Panc1 (cell line): ENCODE measurements at regions of chr12 and their contacts with region 1.

Region 1: DNA sequence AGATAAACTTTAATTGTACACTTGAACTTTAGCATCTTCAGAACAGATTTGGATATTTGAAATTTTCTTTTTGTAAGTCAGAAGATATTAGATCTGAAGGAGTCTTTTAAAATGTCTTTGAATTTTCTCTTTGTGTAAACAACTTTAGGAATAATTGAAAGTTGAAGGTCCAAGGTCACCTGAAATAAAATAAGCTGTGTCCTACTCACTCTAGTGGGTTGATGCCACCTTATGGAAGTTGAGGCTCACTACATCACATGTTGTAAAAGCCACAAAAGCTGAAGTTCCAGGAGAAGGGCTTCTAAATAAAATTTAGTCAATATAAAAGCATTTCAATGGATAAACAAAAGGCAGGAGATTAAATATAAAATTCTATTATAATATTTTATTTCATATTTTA is 122.0 kb upstream of the ATXN7L3B start:
- DNase-seq: no peak
- ATAC-seq: no peak
- H3K4me3 ChIP-seq: no peak overlapping the region
- H3K27ac ChIP-seq: no peak overlapping the region
- H3K4me1 ChIP-seq: no peaks in the 10 kb centered on the region
- H3K27me3 ChIP-seq: no peaks in the 10 kb centered on the region
- CTCF ChIP-seq: peak; percentile 68; the same call in 1 of the 2 replicates

Region 2: GRCh38 chr12:74021937-74022336 is 393.7 kb before region 1 on chr12:
- CTCF ChIA-PET with region 1: interaction called, 3 read pairs
- POLR2A ChIA-PET with region 1: no interaction called
- in situ Hi-C with region 1: no loop called
- intact Hi-C with region 1: loop called (anchors 5 kb)
- DNase-seq: peak; percentile 42
- ATAC-seq: peak; percentile 97
- H3K4me3 ChIP-seq: no peak overlapping the region
- H3K27ac ChIP-seq: no peak overlapping the region
- H3K4me1 ChIP-seq: no peaks in the 10 kb centered on the region
- H3K27me3 ChIP-seq: no peaks in the 10 kb centered on the region
- CTCF ChIP-seq: peak; percentile 83

Region 3: GRCh38 chr12:74537707-74538385 is 122.2 kb after region 1 on chr12 and contains the start of gene ATXN7L3B:
- CTCF ChIA-PET with region 1: no interaction called
- POLR2A ChIA-PET with region 1: no interaction called
- in situ Hi-C with region 1: no loop called
- intact Hi-C with region 1: loop called (anchors 5 kb)
- DNase-seq: peak; percentile 80
- ATAC-seq: peak; percentile 99
- H3K4me3 ChIP-seq: peak within 1 kb of the TSS; percentile 82 to 99
- H3K27ac ChIP-seq: peak within 1 kb of the TSS; percentile 86
- H3K4me1 ChIP-seq: peaks cover 21% of the 10 kb centered on the region
- H3K27me3 ChIP-seq: no peaks in the 10 kb centered on the region; the same call in 1 of the 2 replicates
- CTCF ChIP-seq: no peak
- total RNA-seq, gene ATXN7L3B: 18.0 TPM

Region 4: GRCh38 chr12:74646831-74647230 is 231.2 kb after region 1 on chr12:
- CTCF ChIA-PET with region 1: no interaction called
- POLR2A ChIA-PET with region 1: no interaction called
- in situ Hi-C with region 1: no loop called
- intact Hi-C with region 1: loop called (anchors 10 kb)
- DNase-seq: no peak
- ATAC-seq: no peak
- H3K4me3 ChIP-seq: no peak overlapping the region
- H3K27ac ChIP-seq: no peak overlapping the region
- H3K4me1 ChIP-seq: no peaks in the 10 kb centered on the region
- H3K27me3 ChIP-seq: no peaks in the 10 kb centered on the region
- CTCF ChIP-seq: peak; percentile 48; the same call in 1 of the 2 replicates